HepG2 (cell line): ENCODE measurements at regions of chr1 and their contacts with region 1.

Region 1: GRCh38 chr1:165914136-165914798 is 86.9 kb downstream of the UCK2 start:
- DNase-seq: peak; percentile 67
- ATAC-seq: peak; percentile 21
- H3K4me3 ChIP-seq: no peak overlapping the region
- H3K27ac ChIP-seq: no peak overlapping the region
- H3K4me1 ChIP-seq: peaks cover 63% of the 10 kb centered on the region
- H3K27me3 ChIP-seq: no peaks in the 10 kb centered on the region
- CTCF ChIP-seq: peak; percentile 92
- EP300 ChIP-seq: no peak
- POLR2A ChIP-seq: no peak
- RAD21 ChIP-seq: peak; percentile 85

Region 2: DNA sequence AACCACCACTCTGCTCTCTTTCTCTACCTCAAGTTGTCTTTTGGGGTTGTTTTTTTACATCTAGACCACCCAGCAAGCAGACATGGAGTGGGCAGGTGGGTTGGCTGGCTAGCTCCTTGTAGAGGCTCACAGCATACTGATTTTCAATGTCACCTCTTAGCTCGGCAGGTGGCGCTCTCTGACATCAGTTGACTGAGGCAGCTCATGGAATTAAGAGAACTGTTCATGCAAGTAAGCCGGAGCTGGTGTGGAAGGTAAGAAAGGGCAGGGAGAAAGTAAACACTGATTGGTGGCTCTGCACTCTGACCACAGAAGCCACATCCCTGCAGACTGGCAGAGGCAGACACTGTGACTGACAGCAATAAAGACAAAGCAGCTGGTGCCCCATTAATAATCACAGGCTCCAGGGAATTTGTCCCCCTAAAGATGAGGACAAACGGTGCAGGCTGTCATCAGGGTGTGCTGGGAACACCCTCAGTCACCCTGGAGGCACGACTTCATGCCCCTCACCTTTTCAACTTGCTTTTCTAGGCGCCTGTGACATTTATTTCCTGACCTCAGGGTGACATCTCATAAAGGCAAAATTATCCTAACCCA is 784.6 kb before region 1 on chr1:
- CTCF ChIA-PET with region 1: no interaction called
- POLR2A ChIA-PET with region 1: no interaction called
- in situ Hi-C with region 1: no loop called
- intact Hi-C with region 1: loop called (anchors 10 kb)
- DNase-seq: peak; percentile 83
- ATAC-seq: peak; percentile 100
- H3K4me3 ChIP-seq: no peak overlapping the region
- H3K27ac ChIP-seq: no peak overlapping the region
- H3K4me1 ChIP-seq: peaks cover 11% of the 10 kb centered on the region
- H3K27me3 ChIP-seq: no peaks in the 10 kb centered on the region
- CTCF ChIP-seq: peak; percentile 95
- EP300 ChIP-seq: no peak
- POLR2A ChIP-seq: no peak
- RAD21 ChIP-seq: no peak

Region 3: GRCh38 chr1:165597883-165598675 is 316.2 kb before region 1 on chr1:
- CTCF ChIA-PET with region 1: interaction called, 22 read pairs
- POLR2A ChIA-PET with region 1: interaction called, 3 read pairs
- in situ Hi-C with region 1: loop called (anchors 5 kb)
- intact Hi-C with region 1: loop called (anchors 1 kb)
- DNase-seq: peak; percentile 90
- ATAC-seq: peak; percentile 99
- H3K4me3 ChIP-seq: peak overlapping the region; percentile 55 to 77 (median 70)
- H3K27ac ChIP-seq: peak overlapping the region; percentile 26
- H3K4me1 ChIP-seq: peaks cover 38% of the 10 kb centered on the region
- H3K27me3 ChIP-seq: no peaks in the 10 kb centered on the region
- CTCF ChIP-seq: no peak
- EP300 ChIP-seq: no peak
- POLR2A ChIP-seq: 0 out of 4 replicates have a peak, but pooled peaks of 1 of the 2 experiments have one; percentile 1
- RAD21 ChIP-seq: no peak

Region 4: GRCh38 chr1:165717918-165718515 is 196.2 kb before region 1 on chr1:
- CTCF ChIA-PET with region 1: interaction called, 38 read pairs
- POLR2A ChIA-PET with region 1: interaction called, 3 read pairs
- in situ Hi-C with region 1: no loop called
- intact Hi-C with region 1: loop called (anchors 1 kb)
- DNase-seq: peak; percentile 69
- ATAC-seq: peak; percentile 89
- H3K4me3 ChIP-seq: no peak overlapping the region
- H3K27ac ChIP-seq: no peak overlapping the region
- H3K4me1 ChIP-seq: peaks cover 25% of the 10 kb centered on the region
- H3K27me3 ChIP-seq: no peaks in the 10 kb centered on the region
- CTCF ChIP-seq: peak; percentile 87
- EP300 ChIP-seq: no peak
- POLR2A ChIP-seq: no peak
- RAD21 ChIP-seq: peak; percentile 75

Region 5: DNA sequence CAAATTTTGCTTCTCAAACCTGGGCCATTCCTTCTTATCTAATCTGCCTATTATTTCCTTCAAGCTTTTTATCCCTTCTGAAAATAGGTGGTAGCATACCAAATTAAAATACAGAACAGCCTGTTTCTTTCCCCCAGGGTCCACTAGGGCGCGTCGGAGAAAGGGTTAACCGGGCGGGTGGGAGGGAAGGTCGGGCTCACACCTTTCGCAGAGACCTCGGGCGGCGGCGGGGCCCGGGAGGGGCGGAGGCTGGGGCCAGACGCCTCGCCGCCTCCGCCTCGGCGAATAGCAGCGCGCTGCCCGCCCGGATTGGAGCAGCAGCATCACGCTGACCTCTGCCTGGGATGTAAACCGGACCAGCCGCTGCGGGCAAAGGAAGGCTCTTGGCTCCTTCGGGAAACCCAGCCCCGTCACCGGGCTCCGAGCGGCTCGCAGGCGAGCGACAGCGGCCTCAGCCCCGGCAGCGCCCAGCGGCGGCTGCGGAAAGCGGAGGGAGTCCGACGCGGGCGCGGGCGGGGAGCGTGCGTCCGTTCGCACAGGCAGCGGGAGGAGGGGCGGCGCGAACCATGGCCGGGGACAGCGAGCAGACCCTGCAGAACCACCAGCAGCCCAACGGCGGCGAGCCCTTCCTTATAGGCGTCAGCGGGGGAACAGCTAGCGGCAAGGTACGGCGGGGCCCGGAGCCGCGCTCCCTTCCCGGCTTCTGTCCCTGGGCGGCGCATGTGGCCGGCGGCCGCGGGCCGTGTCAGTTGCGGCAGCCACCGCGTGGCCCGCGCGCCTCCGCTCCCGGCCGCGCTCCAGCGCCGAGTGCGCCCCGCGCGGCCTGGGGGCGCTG is 86.8 kb before region 1 on chr1 and contains the start of gene UCK2:
- CTCF ChIA-PET with region 1: no interaction called
- POLR2A ChIA-PET with region 1: interaction called, 14 read pairs
- in situ Hi-C with region 1: loop called (anchors 5 kb)
- intact Hi-C with region 1: loop called (anchors 2 kb)
- DNase-seq: peak; percentile 71
- ATAC-seq: peak; percentile 90
- H3K4me3 ChIP-seq: peak within 1 kb of the TSS; percentile 81 to 87 (median 86)
- H3K27ac ChIP-seq: peak within 1 kb of the TSS; percentile 94
- H3K4me1 ChIP-seq: peaks cover 37% of the 10 kb centered on the region
- H3K27me3 ChIP-seq: peaks cover 0 to 4% of the 10 kb centered on the region in 2 experiments; a peak in 2 of 5 replicates
- CTCF ChIP-seq: no peak
- EP300 ChIP-seq: no peak
- POLR2A ChIP-seq: peak; percentile 74 to 84
- RAD21 ChIP-seq: peak; percentile 66
- total RNA-seq, gene UCK2: 61.2 and 64.3 TPM in 2 replicates

Region 6: GRCh38 chr1:165884690-165885304 is 29.5 kb before region 1 on chr1:
- CTCF ChIA-PET with region 1: no interaction called
- POLR2A ChIA-PET with region 1: interaction called, 13 read pairs
- in situ Hi-C with region 1: no loop called
- intact Hi-C with region 1: no loop called
- DNase-seq: peak; percentile 83
- ATAC-seq: peak; percentile 90
- H3K4me3 ChIP-seq: peak overlapping the region in 2 of 3 experiments; percentile 34; a peak in 2 of 6 replicates
- H3K27ac ChIP-seq: peak overlapping the region; percentile 73
- H3K4me1 ChIP-seq: peaks cover 83% of the 10 kb centered on the region
- H3K27me3 ChIP-seq: no peaks in the 10 kb centered on the region
- CTCF ChIP-seq: 0 out of 2 replicates have a peak, but pooled peaks have one; percentile 7
- EP300 ChIP-seq: peak in 1 of 2 experiments; percentile 52; a peak in 1 of 4 replicates
- POLR2A ChIP-seq: no peak
- RAD21 ChIP-seq: no peak